Naive thymus-derived CD4-positive, alpha-beta T cell (primary cell): ENCODE measurements at regions of chr9 and their contacts with region 1.

Region 1: DNA sequence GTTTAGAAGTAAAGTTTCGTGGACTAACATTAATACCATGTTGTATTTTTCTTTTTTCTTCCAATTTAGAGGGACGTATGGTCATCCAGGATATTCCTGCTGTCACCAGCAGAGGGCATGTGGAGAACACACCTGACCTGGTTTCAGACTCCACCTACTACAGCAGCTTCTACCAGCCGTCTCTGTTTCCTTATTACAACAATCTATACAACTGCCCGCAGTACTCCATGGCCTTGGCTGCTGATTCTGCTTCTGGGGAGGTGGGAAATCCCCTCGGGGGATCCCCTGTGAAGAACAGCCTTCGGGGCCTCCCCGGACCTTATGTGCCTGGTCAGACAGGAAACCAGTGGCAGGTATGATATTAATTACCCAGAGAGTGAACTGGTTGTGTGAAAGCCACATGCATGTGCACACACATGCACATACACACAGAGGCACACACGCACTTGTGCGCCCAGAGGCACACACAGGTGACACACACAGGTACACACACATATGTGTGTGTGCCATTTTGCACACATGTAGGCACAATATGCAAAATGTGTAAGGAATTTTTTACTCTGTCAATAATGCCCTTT is 52.4 kb downstream of the DMRT1 start:
- DNase-seq: peak in 8 of 9 donors; percentile 7 to 50 (median 37)
- ATAC-seq: peak; percentile 94
- H3K4me3 ChIP-seq: no peak overlapping the region
- H3K4me3 Mint-ChIP-seq: peak overlapping the region in 9 of 10 donors; percentile 23 to 70 (median 48)
- H3K27ac ChIP-seq: no peak overlapping the region
- H3K27ac Mint-ChIP-seq: peak overlapping the region in 2 of 9 donors; percentile 31 to 52
- H3K4me1 ChIP-seq: peaks cover 0 to 5% of the 10 kb centered on the region in 2 donors
- H3K4me1 Mint-ChIP-seq: peaks cover 4 to 11% (median 8%) of the 10 kb centered on the region in 7 donors
- H3K27me3 ChIP-seq: no peaks in the 10 kb centered on the region
- H3K27me3 Mint-ChIP-seq: peaks cover 7 to 24% (median 14%) of the 10 kb centered on the region in 5 donors

Region 2: GRCh38 chr9:1009101-1009707 is 115.3 kb after region 1 on chr9:
- CTCF ChIA-PET with region 1: interaction called, 5 read pairs
- POLR2A ChIA-PET with region 1: no interaction called
- intact Hi-C with region 1: loop called (anchors 1 kb)
- DNase-seq: peak; percentile 37 to 76 (median 58)
- ATAC-seq: peak; percentile 92
- H3K4me3 ChIP-seq: no peak overlapping the region
- H3K4me3 Mint-ChIP-seq: no peak overlapping the region
- H3K27ac ChIP-seq: no peak overlapping the region
- H3K27ac Mint-ChIP-seq: no peak overlapping the region
- H3K4me1 ChIP-seq: no peaks in the 10 kb centered on the region
- H3K4me1 Mint-ChIP-seq: peaks cover 0 to 10% (median 0%) of the 10 kb centered on the region in 7 donors
- H3K27me3 ChIP-seq: no peaks in the 10 kb centered on the region
- H3K27me3 Mint-ChIP-seq: peaks cover 15 to 43% (median 34%) of the 10 kb centered on the region in 5 donors

Region 3: GRCh38 chr9:1604942-1605560 is 711.1 kb after region 1 on chr9:
- CTCF ChIA-PET with region 1: no interaction called
- POLR2A ChIA-PET with region 1: no interaction called
- intact Hi-C with region 1: loop called in 1 of 2 experiments (anchors 5 kb)
- DNase-seq: no peak
- ATAC-seq: no peak
- H3K4me3 ChIP-seq: no peak overlapping the region
- H3K4me3 Mint-ChIP-seq: no peak overlapping the region
- H3K27ac ChIP-seq: no peak overlapping the region
- H3K27ac Mint-ChIP-seq: no peak overlapping the region
- H3K4me1 ChIP-seq: no peaks in the 10 kb centered on the region
- H3K4me1 Mint-ChIP-seq: no peaks in the 10 kb centered on the region
- H3K27me3 ChIP-seq: no peaks in the 10 kb centered on the region
- H3K27me3 Mint-ChIP-seq: peaks cover 0 to 39% (median 18%) of the 10 kb centered on the region in 5 donors